ENCODE measurements at regions of chr2 and their contacts with region 1.

Region 1: GRCh38 chr2:188937228-188938220 is 36.6 kb upstream of the COL3A1 start:
- DNase-seq: no peak
- ATAC-seq: peak; percentile 41 to 81 (median 72)
- H3K4me3 ChIP-seq: no peak overlapping the region
- H3K27ac ChIP-seq: peak overlapping the region; percentile 40 to 76 (median 66)
- H3K4me1 ChIP-seq: peaks cover 0 to 19% (median 0%) of the 10 kb centered on the region in 9 donors
- H3K27me3 ChIP-seq: no peaks in the 10 kb centered on the region
- CTCF ChIP-seq: no peak

Region 2: GRCh38 chr2:188897096-188897495 is 40.4 kb before region 1 on chr2:
- intact Hi-C with region 1: loop called in 2 of 10 experiments (anchors 1 to 5 kb)
- DNase-seq: peak in 1 of 2 donors; percentile 9
- ATAC-seq: peak in 5 of 8 donors; percentile 50 to 83 (median 71)
- H3K4me3 ChIP-seq: no peak overlapping the region
- H3K27ac ChIP-seq: peak overlapping the region in 6 of 10 donors; percentile 2 to 59 (median 32)
- H3K4me1 ChIP-seq: peaks cover 0 to 5% (median 0%) of the 10 kb centered on the region in 9 donors
- H3K27me3 ChIP-seq: no peaks in the 10 kb centered on the region
- CTCF ChIP-seq: no peak

Region 3: GRCh38 chr2:188902901-188903491 is 34.5 kb before region 1 on chr2:
- intact Hi-C with region 1: loop called in 2 of 10 experiments (anchors 1 to 5 kb)
- DNase-seq: no peak
- ATAC-seq: no peak
- H3K4me3 ChIP-seq: no peak overlapping the region
- H3K27ac ChIP-seq: no peak overlapping the region
- H3K4me1 ChIP-seq: no peaks in the 10 kb centered on the region
- H3K27me3 ChIP-seq: no peaks in the 10 kb centered on the region
- CTCF ChIP-seq: no peak